Testis (tissue), 5 donors: ENCODE measurements at regions of chr7 and their contacts with region 1.

Region 1: GRCh38 chr7:47179812-47180515 is 401.9 kb downstream of the TNS3 start:
- DNase-seq: peak; percentile 69
- H3K4me3 ChIP-seq: no peak overlapping the region
- H3K27ac ChIP-seq: no peak overlapping the region
- H3K4me1 ChIP-seq: peaks cover 7% of the 10 kb centered on the region
- H3K27me3 ChIP-seq: no peaks in the 10 kb centered on the region
- CTCF ChIP-seq: peak; percentile 58 to 74 (median 72)
- POLR2A ChIP-seq: no peak

Region 2: GRCh38 chr7:45917658-45918057 is 1262.3 kb before region 1 on chr7:
- intact Hi-C with region 1: loop called (anchors 10 kb)
- DNase-seq: peak; percentile 87
- H3K4me3 ChIP-seq: no peak overlapping the region
- H3K27ac ChIP-seq: no peak overlapping the region
- H3K4me1 ChIP-seq: peaks cover 5% of the 10 kb centered on the region
- H3K27me3 ChIP-seq: no peaks in the 10 kb centered on the region
- CTCF ChIP-seq: peak; percentile 87 to 98 (median 88)
- POLR2A ChIP-seq: no peak

Region 3: DNA sequence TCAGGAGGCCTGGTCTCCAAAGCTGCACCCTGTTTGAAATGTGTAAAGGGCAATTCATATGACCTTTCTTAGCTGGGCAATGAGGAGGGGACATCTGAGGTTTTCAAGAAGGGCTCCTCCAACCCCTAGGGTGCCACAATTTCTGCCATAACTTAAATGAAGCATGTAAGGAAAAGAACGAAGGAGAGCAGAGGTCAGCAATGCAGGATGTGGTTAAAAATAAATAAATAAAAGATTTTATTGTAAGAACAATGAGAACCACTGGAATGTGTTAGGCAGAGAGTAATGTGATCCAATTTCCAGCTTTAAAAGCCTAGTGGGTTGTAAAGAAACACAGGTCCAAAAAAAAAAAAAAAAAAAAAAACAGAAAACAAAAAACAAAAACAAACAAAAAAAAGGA is 271.2 kb before region 1 on chr7:
- intact Hi-C with region 1: no loop called
- DNase-seq: no peak
- H3K4me3 ChIP-seq: no peak overlapping the region
- H3K27ac ChIP-seq: no peak overlapping the region
- H3K4me1 ChIP-seq: no peaks in the 10 kb centered on the region
- H3K27me3 ChIP-seq: no peaks in the 10 kb centered on the region
- CTCF ChIP-seq: no peak
- POLR2A ChIP-seq: no peak

Region 4: DNA sequence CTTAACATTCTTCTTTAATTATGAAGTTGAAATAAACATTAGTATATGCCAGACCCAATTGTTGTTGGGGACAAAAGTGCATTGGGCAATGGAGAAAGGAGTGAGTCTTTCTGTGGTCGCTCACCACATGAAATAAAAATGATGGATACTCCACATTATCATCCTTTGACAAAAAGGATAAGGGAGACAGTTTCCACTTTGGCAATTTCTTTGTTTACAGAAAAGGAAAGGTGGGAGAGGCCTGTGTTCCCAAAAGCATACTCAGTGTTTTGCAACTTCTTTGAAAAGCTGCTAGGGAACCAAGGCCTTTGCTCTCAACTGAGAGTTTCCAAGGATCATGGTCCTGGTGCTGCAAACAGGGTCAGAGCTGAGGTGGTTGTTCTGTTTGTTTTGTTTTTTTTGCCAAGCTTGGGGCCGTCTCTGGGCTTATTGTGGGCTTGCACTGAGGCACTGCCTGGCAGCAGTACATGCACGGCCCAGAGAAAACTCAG is 60.0 kb after region 1 on chr7:
- intact Hi-C with region 1: loop called (anchors 10 kb)
- DNase-seq: peak; percentile 37
- H3K4me3 ChIP-seq: no peak overlapping the region
- H3K27ac ChIP-seq: no peak overlapping the region
- H3K4me1 ChIP-seq: peaks cover 26% of the 10 kb centered on the region
- H3K27me3 ChIP-seq: no peaks in the 10 kb centered on the region
- CTCF ChIP-seq: no peak
- POLR2A ChIP-seq: no peak

Region 5: GRCh38 chr7:47351233-47352154 is 171.5 kb after region 1 on chr7:
- intact Hi-C with region 1: no loop called
- DNase-seq: no peak
- H3K4me3 ChIP-seq: no peak overlapping the region
- H3K27ac ChIP-seq: no peak overlapping the region
- H3K4me1 ChIP-seq: peaks cover 7% of the 10 kb centered on the region
- H3K27me3 ChIP-seq: no peaks in the 10 kb centered on the region
- CTCF ChIP-seq: no peak
- POLR2A ChIP-seq: no peak